AG04449 (cell line): ENCODE measurements at regions of chr2 and their contacts with region 1.

Region 1: GRCh38 chr2:190079160-190079559 is 16.6 kb upstream of the MSTN start:
- DNase-seq: no peak
- H3K4me3 ChIP-seq: no peak overlapping the region
- CTCF ChIP-seq: no peak

Region 2: DNA sequence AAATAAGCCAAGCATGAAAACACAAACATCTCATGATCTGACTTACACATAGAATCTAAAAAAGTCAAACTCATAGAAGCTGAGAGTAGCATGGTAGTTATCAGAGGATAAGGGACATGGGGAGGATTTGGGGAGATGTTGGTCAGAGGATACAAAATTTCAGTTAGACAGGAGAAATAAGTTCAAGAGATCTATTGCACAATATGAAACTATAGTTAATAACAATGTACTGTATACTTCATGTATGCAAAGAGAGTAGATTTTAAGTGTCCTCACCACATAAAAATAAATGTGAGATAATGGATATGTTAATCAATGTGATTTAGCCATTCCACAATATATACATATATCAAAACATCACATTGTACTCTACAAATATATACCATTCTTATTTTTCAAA is 427.9 kb before region 1 on chr2:
- CTCF ChIA-PET with region 1: no interaction called
- POLR2A ChIA-PET with region 1: no interaction called
- DNase-seq: no peak
- H3K4me3 ChIP-seq: no peak overlapping the region
- CTCF ChIP-seq: no peak

Region 3: DNA sequence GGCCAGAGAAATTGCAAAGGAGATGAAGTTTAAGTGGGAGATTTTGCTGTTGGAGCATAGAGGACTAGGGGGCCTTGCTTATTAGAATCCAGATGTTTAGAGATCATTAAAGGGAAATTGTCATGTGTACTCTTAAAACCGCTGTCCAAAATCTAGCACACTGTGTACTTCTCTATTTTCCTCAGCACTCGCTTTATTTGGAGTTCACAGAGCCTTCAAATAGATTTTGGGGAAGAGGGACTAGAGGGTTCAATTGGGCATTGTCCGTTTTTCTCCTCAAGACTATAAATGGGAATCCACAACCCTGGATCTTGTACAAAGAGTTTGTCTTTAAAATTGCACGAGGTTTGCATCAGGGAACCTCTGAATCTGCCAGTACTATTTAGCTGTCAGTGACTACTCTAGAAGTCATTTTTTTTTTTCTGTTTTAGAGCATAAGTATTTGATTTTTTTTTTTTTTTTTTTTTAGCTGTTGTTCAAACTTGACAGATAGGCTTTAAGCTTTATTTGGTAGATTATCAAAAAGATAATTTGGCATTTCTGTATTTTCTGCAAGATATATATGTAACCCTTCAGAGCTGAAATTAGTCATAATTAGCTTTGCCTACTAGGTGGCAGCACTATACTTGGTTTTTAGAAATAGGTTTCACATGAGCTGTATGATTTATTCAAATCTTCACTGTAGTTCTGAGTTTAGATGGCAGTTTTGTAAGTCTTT is 280.7 kb before region 1 on chr2:
- CTCF ChIA-PET with region 1: interaction called, 95 read pairs
- POLR2A ChIA-PET with region 1: no interaction called
- DNase-seq: peak; percentile 21
- H3K4me3 ChIP-seq: no peak overlapping the region
- CTCF ChIP-seq: peak; percentile 37

Region 4: GRCh38 chr2:189899101-189899500 is 180.1 kb before region 1 on chr2:
- CTCF ChIA-PET with region 1: no interaction called
- POLR2A ChIA-PET with region 1: no interaction called
- DNase-seq: no peak
- H3K4me3 ChIP-seq: no peak overlapping the region
- CTCF ChIP-seq: no peak

Region 5: DNA sequence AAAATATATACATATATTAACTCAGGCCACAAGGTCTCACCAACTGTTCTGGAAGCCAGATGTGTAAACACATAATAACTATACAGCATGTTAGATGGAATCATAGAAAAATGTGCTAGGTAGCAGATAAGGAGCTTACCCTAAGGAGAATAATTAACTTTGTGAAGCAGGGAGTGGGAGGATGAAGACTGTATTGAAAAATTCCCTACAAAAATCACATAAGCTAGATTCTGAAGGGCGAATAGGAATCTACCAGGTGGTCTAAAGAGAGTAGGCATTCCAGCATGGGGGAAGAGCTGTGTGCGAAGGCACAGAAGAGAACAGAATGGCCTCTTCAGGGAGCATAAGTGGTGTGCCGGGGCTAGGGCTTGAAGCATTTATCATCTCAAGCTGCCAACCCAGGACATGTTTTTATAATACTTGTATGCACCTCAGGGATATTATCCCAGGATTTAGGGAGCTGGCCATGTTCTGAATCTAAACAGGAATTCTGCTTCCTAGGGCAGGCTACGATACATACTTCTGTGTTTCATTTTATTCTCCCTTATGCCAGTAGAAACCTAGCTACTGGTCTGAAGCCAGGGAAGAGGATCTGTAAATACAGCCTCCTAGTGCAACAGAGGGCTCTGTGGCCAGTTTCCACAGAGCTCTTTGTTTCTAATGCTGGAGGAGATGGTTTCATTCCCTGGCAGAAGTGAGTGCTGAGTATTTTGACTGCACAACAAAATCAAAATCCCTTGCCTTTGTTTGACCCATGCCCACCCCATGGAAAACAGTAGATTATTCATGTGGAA is 398.7 kb after region 1 on chr2:
- CTCF ChIA-PET with region 1: no interaction called
- POLR2A ChIA-PET with region 1: no interaction called
- DNase-seq: no peak
- H3K4me3 ChIP-seq: no peak overlapping the region
- CTCF ChIP-seq: no peak